HEK293T (cell line): ENCODE measurements at regions of chr22 and their contacts with region 1.

Region 1: DNA sequence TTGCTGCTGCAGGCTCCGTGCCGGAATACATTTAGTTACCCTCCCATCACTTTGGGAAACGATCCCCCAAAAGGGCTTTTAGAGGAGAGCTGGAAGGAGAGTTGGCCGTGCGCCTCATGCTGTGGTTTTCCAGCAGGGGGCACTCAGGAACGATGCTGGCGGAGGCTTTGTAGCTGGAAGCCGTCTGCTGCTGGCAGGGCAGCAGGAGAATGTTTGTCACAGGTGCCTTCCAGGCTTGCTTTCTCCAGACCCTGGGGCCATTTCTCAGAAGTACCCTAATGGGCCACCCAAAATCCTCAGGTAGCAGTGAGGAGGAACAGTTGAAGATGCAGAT is 30.0 kb upstream of the CABP7 start:
- DNase-seq: peak; percentile 77

Region 2: DNA sequence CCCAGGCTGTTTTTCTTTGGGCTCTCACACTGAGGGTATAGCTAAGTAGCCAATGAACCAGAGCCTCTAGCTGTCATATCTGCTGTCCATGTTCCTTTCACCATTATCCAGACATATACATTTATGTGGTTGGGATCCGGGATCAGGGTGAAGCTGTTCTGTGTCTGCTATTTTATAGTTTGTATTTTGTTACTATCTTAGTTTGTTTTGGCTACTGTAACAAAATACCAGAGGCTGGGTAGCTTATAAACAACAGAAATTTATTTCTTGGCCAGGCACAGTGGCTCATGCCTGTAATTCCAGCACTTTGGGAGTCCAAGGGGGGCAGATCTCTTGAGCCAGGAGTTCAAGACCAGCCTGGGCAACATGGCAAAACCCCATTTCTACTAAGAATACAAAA is 10.5 kb before region 1 on chr22:
- CTCF ChIA-PET with region 1: interaction called, 11 read pairs
- POLR2A ChIA-PET with region 1: no interaction called
- DNase-seq: no peak

Region 3: DNA sequence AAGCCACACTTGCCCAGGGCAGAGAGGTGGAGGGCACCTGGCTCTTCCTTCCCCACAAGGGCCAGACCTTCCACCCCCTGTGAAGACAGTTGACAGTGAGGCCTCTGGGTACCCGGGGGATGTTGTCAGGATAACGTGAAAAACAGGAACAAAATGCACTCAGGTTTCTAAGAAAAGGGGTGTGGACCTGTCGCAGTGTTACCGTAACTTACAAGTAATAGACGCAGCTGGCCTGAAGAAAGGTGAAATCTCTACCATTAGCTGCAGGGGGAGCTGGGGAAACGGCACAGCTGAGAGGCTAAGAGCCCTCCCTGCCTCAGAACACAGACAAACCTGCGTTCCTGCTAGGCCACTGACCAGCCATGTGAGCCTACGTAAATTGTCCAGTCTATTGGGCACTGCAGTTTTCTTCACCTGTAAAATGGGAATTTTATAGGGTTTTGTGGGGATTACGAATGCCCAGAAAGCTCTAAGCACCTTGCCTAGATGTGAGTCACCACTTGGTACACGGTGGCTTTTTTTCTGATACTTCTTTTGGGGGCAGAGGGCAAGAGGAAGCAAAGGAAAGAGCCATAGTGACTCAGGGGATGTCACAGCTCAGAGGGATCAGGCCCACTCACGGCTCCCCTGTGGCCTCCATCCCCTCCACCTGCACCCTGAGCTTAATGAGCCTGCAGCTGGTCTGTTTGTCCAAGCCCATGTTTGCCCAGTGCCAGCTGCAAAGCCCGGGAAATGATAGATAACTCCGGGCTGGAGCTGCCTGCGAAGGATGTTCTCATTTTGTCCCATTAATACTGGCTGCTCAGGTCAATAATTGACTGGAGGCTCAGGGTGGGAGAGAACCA is 11.5 kb after region 1 on chr22:
- CTCF ChIA-PET with region 1: interaction called, 14 read pairs
- POLR2A ChIA-PET with region 1: interaction called, 3 read pairs
- DNase-seq: peak; percentile 54

Region 4: GRCh38 chr22:30005213-30005857 is 315.5 kb after region 1 on chr22:
- CTCF ChIA-PET with region 1: interaction called, 10 read pairs
- POLR2A ChIA-PET with region 1: no interaction called
- DNase-seq: peak; percentile 79